ENCODE measurements at regions of chr10 and their contacts with region 1.

Region 1: DNA sequence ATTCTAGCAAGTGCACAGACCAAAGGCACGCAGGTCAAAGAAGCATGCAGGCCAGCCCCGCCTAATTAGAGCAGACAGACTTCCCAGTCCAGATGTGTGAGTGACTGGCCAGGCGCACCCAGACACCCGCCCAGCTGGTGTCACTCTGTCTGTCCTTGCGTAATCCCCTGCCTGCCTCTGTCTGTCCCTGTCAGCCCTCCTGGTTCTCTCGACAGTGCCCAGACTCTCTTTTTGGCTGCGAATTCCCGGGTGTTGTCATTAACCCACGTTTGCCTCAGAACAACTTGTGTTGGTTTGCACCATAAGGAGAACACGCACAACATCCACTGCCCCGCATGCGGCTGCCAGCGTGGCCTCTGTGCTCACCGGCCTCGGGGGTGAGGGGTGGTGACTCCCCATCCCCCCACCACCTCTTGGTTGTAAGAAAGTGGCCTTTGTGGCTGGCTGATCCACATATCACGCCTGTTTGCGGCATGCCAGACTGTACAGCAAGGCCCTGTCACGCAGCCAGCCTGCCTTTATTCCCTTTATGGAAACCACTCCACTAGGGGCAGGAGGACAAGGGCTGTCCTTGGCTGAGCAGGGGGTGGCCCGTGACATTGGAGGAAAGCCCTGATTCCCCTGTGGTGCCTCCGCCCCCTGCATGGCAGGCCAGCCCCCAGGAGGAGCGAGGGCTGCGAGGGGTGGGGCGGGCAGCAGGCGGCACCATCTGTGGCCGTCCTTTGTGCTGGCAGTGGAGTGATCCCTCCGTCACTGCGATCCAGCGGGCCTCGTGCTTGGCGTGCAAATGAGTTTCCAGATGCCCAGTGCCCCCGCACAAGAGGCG is 72.8 kb upstream of the PPIF start:
- DNase-seq: peak; percentile 87
- H3K4me3 ChIP-seq: no peak overlapping the region; a peak in 1 of 4 replicates
- H3K27ac ChIP-seq: peak overlapping the region; percentile 27 to 99; a peak in 3 of 4 replicates
- H3K4me1 ChIP-seq: peaks cover 8 to 86% of the 10 kb centered on the region in 2 experiments
- H3K27me3 ChIP-seq: no peaks in the 10 kb centered on the region
- CTCF ChIP-seq: no peak
- EP300 ChIP-seq: peak in 1 of 2 experiments; percentile 83; a peak in 2 of 4 replicates
- RAD21 ChIP-seq: peak; percentile 34

Region 2: DNA sequence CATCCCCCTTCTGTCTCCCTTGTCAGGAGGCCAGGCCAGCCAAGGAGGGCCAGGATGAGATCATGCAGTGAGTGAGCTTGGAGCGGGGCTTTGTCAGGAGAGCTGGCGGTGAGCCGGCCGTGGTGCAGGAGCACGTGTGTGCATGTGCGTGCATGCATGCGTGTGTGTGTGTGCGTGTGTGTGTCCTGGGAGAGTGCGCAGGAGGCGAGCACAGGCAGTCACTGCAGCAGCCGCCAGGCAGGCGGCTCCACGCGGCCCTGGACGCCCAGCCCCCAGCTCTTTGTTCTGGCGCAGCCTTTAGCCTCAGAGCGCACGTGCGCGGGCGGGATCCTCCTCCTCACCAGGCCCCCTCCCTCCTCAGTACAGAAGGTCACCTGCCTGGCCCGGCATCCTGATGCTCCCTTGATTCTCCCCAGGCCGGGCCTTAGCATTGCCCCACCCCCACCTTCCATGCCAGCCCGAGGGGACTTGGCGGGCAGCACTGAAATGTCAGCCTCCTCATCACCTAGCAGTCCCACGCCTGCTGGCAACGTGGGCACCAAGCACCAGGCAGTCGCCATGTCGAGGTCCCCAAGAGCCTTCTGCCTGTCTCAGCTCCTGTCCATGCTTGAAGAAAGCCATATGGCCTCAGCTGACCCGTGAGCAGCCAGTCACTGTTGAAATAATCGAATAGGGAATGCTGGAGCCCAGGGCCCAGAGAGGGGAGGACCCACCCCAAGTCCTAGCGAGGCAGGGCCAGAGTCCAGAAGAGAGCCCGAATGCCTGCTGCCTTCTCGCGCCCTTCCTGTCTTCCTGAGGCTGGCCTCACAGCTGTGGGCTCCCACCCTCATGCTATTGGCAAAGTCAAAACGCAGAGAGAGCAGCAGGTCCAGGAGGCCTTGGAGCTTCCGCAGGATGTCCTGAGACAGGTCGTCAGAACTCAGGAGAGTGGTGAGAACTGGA is 53.1 kb before region 1 on chr10:
- CTCF ChIA-PET with region 1: interaction called, 4 read pairs
- POLR2A ChIA-PET with region 1: interaction called, 37 read pairs
- DNase-seq: peak; percentile 84
- H3K4me3 ChIP-seq: no peak overlapping the region
- H3K27ac ChIP-seq: peak overlapping the region; percentile 72 to 93
- H3K4me1 ChIP-seq: peaks cover 33 to 79% of the 10 kb centered on the region in 2 experiments
- H3K27me3 ChIP-seq: no peaks in the 10 kb centered on the region
- CTCF ChIP-seq: no peak
- EP300 ChIP-seq: peak in 1 of 2 experiments; percentile 49; a peak in 2 of 4 replicates
- RAD21 ChIP-seq: peak; percentile 31

Region 3: DNA sequence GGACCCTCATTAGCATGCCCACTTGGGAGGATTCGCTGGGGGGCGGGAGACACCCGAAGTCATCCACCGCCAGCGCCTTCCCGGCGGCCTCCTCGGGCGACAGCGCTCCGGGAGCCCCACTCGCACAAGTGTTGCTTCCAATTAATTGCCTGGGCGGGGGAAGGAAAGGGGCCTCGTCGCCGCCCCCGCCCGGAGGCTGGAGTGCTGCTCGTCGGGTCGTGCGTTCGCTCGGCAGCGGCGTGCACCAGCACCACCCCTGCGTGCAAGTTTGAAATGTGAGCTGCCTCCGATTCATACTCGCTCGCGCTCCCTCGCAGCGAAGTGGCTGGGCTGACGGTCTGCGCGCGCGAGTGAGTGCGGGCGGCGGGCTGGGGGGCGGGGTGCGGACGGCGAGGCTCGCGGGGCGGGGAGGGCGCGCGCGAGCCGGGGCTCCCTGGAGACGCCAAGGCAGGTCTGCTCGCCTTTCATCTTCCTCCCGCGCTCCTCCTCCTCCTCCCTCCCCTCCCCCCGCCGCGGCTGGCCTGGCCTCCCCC is 31.8 kb before region 1 on chr10:
- CTCF ChIA-PET with region 1: interaction called, 5 read pairs
- POLR2A ChIA-PET with region 1: interaction called, 24 read pairs
- DNase-seq: peak; percentile 86
- H3K4me3 ChIP-seq: peak overlapping the region; percentile 53 to 59
- H3K27ac ChIP-seq: peak overlapping the region; percentile 41 to 99; a peak in 3 of 4 replicates
- H3K4me1 ChIP-seq: peaks cover 68 to 85% of the 10 kb centered on the region in 2 experiments
- H3K27me3 ChIP-seq: no peaks in the 10 kb centered on the region
- CTCF ChIP-seq: no peak
- EP300 ChIP-seq: no peak
- RAD21 ChIP-seq: peak; percentile 16; the same call in 1 of the 2 replicates

Region 4: DNA sequence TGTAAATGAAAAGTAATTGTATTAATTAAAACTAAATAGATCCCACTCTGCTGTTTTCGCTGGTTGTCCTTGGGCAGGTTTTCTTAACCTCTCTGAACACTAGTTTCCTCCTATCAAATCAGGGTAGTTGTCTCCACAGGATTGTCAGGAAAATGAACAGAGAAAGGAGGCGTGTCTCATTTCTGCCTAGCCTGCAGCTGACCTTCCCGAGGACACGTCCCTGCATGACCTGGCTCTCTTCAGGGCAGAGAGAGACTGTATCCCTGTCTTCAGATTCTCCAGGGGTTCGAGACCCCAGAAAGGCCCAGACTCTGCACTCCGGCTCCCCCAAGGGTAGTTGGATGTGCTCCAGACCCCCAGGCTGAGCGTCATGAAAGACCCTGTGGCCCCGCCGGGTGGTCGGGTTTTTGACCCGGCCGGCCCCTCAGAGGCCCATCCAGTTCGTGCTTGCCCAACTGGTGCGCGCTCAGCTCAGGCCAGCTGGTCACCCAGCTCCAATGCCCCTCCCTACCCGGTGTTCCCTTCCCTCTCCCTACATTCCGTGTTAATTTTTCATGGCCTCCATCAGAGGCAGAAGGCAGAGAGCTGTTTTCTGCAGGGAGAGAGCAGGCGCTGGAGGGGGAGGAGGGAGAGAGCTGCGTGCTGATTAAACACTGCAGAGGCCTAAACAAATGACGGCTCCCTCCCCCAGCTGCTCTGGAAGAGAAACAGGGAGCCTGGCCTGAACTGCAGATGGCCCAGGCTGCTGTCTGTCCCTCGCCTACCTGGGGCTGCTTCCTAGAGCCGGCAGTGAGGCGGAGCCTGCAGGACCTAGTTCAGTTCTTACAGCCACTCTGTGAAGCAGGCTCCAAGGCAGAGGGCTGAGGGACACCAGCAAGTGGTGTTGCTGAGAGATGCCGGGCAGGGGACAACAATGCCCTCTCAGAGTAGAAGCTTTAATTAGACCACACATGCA is 13.4 kb before region 1 on chr10:
- CTCF ChIA-PET with region 1: interaction called, 11 read pairs
- POLR2A ChIA-PET with region 1: interaction called, 12 read pairs
- DNase-seq: peak; percentile 86
- H3K4me3 ChIP-seq: no peak overlapping the region
- H3K27ac ChIP-seq: peak overlapping the region; percentile 56 to 99; a peak in 3 of 4 replicates
- H3K4me1 ChIP-seq: peaks cover 23 to 100% of the 10 kb centered on the region in 2 experiments
- H3K27me3 ChIP-seq: no peaks in the 10 kb centered on the region
- CTCF ChIP-seq: no peak
- EP300 ChIP-seq: peak in 1 of 2 experiments; percentile 93; a peak in 2 of 4 replicates
- RAD21 ChIP-seq: peak; percentile 54

Region 5: GRCh38 chr10:79445141-79445976 is 170.9 kb after region 1 on chr10 and contains the start of gene ZCCHC24:
- CTCF ChIA-PET with region 1: no interaction called
- POLR2A ChIA-PET with region 1: no interaction called
- DNase-seq: peak; percentile 96
- H3K4me3 ChIP-seq: peak within 1 kb of the TSS; percentile 72 to 97
- H3K27ac ChIP-seq: peak within 1 kb of the TSS; percentile 78 to 80
- H3K4me1 ChIP-seq: peaks cover 12 to 39% of the 10 kb centered on the region in 2 experiments; a peak in 2 of 4 replicates
- H3K27me3 ChIP-seq: no peaks in the 10 kb centered on the region
- CTCF ChIP-seq: no peak
- EP300 ChIP-seq: no peak
- RAD21 ChIP-seq: no peak; the same call in 1 of the 2 replicates
- polyA plus RNA-seq, gene ZCCHC24: 15.8 and 16.2 TPM in 2 replicates